HCT116 (cell line): ENCODE measurements at regions of chr19 and their contacts with region 1.

Region 1: GRCh38 chr19:40603389-40604135 is 2.4 kb downstream of the LTBP4 start:
- DNase-seq: peak; percentile 99
- ATAC-seq: peak; percentile 68
- H3K4me3 ChIP-seq: peak overlapping the region; percentile 62 to 67
- H3K27ac ChIP-seq: peak overlapping the region; percentile 87
- H3K4me1 ChIP-seq: peaks cover 36 to 86% of the 10 kb centered on the region in 2 experiments
- H3K27me3 ChIP-seq: no peaks in the 10 kb centered on the region
- CTCF ChIP-seq: no peak
- POLR2A ChIP-seq: no peak
- RAD21 ChIP-seq: no peak

Region 2: GRCh38 chr19:40139533-40140287 is 463.9 kb before region 1 on chr19:
- CTCF ChIA-PET with region 1: no interaction called
- POLR2A ChIA-PET with region 1: no interaction called
- RAD21 ChIA-PET with region 1: no interaction called
- intact Hi-C with region 1: loop called (anchors 10 kb)
- DNase-seq: peak; percentile 48
- ATAC-seq: peak; percentile 80
- H3K4me3 ChIP-seq: no peak overlapping the region
- H3K27ac ChIP-seq: no peak overlapping the region
- H3K4me1 ChIP-seq: no peaks in the 10 kb centered on the region
- H3K27me3 ChIP-seq: peaks cover 18% of the 10 kb centered on the region; the same call in 1 of the 2 replicates
- CTCF ChIP-seq: peak; percentile 60 to 91 (median 85)
- POLR2A ChIP-seq: no peak
- RAD21 ChIP-seq: peak; percentile 98

Region 3: DNA sequence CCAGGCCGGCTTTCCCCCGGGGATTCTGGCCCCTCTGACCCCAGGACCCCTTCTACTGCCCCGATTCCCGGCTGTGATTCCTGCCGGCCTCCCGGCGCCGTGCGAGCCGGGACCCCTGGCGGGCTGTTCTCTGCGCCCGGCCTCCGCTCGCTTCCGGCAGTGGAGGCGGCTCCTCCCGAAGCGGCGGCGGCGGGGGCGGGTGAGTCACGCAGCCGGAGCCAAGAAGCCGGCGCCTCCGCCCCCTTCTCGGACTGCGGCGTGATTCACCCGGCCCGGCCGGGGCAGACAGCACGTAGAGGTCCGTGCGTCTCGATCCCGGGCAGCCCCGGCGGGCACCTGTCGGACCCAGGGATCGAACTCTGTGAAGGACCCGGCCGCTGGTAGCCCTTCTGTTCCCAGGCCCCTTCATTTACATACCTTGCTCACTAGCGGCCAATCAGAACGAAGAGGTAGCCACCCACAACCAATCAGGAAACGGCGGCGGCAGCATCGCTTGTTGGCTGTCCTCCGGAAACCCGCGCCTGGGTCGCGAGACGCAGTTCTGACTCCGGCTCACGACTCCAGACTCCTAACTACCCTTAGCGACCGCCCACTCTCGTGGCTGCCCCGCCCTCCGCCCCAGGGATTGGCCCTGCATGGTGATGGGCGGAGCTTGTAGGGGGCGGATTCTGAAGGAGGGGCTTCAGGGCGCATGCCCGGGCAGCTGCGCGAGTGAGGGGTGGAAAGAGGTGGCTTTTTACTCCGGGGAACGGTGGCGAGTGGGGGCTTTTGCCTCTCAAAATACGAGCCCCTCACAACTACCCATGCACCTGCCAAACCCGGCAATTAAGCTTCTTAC is 177.9 kb before region 1 on chr19 and contains the start of gene SERTAD1:
- CTCF ChIA-PET with region 1: interaction called, 4 read pairs
- POLR2A ChIA-PET with region 1: interaction called, 5 read pairs
- RAD21 ChIA-PET with region 1: no interaction called
- intact Hi-C with region 1: loop called (anchors 5 kb)
- DNase-seq: peak; percentile 98
- ATAC-seq: peak; percentile 79
- H3K4me3 ChIP-seq: peak within 1 kb of the TSS; percentile 65 to 84
- H3K27ac ChIP-seq: peak within 1 kb of the TSS; percentile 98
- H3K4me1 ChIP-seq: peaks cover 27 to 57% of the 10 kb centered on the region in 2 experiments
- H3K27me3 ChIP-seq: no peaks in the 10 kb centered on the region
- CTCF ChIP-seq: peak; percentile 23 to 82 (median 75); a peak in 5 of 6 replicates
- POLR2A ChIP-seq: peak; percentile 97
- RAD21 ChIP-seq: peak; percentile 36
- total RNA-seq, gene SERTAD1: 30.3 TPM

Region 4: DNA sequence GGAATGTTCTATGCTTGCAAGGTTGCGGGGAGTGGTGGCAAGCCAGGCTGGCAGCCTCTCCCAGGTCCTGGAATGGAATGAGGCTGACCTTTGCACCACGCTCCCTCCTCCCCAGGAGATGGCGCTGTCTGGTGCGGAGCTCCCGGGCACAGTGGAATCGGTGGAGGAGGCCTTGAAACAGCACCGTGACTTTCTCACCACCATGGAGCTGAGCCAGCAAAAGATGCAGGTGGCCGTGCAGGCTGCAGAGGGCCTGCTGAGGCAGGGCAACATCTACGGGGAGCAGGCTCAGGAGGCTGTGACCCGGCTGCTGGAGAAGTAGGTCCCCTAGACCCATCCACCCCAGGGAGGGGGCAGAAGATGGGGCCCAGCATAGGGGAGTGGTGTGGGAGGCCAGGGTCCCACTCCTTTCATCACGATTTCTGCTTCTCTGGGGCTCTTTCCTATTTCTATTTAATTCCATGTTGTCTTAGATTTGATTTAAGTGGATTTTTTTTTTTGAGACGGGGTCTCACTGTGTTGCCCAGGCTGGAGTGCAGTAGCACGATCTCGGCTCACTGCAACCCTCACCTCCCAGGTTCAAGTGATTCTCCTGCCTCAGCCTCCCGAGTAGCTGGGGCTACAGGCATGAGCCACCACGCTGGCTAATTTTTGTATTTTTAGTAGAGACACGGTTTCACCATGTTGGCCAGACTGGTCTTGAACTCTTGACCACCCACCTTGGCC is 80.1 kb before region 1 on chr19:
- CTCF ChIA-PET with region 1: interaction called, 19 read pairs
- POLR2A ChIA-PET with region 1: no interaction called
- RAD21 ChIA-PET with region 1: no interaction called
- intact Hi-C with region 1: loop called (anchors 5 kb)
- DNase-seq: peak; percentile 72
- ATAC-seq: peak; percentile 95
- H3K4me3 ChIP-seq: peak overlapping the region; percentile 41 to 51
- H3K27ac ChIP-seq: peak overlapping the region; percentile 4; the same call in 1 of the 2 replicates
- H3K4me1 ChIP-seq: peaks cover 6 to 23% of the 10 kb centered on the region in 2 experiments
- H3K27me3 ChIP-seq: no peaks in the 10 kb centered on the region
- CTCF ChIP-seq: peak; percentile 91 to 95 (median 92)
- POLR2A ChIP-seq: no peak
- RAD21 ChIP-seq: peak; percentile 73

Region 5: DNA sequence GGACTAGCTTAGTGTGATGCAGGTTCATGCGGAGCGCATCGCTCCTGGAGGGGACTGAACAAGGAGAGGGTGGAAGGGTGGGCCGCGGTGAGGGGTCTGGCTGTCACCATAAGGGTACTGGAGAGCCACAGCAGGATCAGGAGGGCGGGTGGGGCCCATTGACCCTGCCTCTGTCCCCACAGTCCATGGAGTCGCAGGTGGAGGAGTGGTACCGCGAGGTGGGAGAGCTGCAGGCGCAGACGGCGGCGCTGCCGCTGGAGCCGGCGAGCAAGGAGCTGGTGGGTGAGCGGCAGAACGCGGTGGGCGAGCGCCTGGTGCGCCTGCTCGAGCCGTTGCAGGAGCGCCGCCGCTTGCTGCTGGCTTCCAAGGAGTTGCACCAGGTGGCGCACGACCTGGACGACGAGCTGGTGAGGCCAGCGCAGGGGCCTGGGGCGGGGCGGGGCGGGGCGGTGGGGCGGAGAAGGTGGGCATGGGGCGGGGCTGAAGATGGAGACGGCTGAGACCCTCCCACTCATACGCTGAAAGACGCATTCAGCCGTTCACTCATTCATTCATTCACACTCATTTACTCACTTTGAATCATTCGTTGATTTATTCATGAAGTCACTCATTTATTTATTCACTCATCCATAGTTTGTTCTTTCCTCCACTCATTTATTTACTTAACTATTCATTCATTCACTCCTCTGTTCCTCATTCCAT is 54.4 kb before region 1 on chr19:
- CTCF ChIA-PET with region 1: interaction called, 27 read pairs
- POLR2A ChIA-PET with region 1: interaction called, 3 read pairs
- RAD21 ChIA-PET with region 1: interaction called, 3 read pairs
- intact Hi-C with region 1: loop called (anchors 1 kb)
- DNase-seq: peak; percentile 63
- ATAC-seq: peak; percentile 98
- H3K4me3 ChIP-seq: peak overlapping the region; percentile 26 to 45
- H3K27ac ChIP-seq: no peak overlapping the region
- H3K4me1 ChIP-seq: peaks cover 4 to 11% of the 10 kb centered on the region in 2 experiments
- H3K27me3 ChIP-seq: no peaks in the 10 kb centered on the region
- CTCF ChIP-seq: peak; percentile 43 to 64 (median 59)
- POLR2A ChIP-seq: no peak
- RAD21 ChIP-seq: peak; percentile 57

Region 6: DNA sequence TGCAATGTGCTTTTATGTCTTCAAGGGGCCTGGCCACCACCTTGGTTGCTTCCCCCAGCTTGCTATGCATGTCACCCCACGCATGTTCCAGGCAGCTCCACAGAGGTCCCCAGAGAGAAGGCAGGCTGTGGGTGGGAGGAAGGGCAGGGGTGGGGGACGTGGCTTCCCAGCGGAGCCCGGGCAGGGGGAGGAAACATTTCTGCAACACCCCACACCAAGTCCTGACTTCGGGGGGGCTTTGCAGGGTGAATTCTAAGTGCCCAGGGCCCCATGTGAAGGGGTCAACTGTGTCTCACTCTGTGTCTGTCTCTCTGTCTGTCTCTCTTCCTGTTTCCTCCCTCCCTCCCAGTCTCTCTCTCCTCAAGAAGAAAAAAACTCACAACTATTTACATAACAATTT is 37.2 kb after region 1 on chr19:
- CTCF ChIA-PET with region 1: interaction called, 32 read pairs
- POLR2A ChIA-PET with region 1: no interaction called
- RAD21 ChIA-PET with region 1: no interaction called
- intact Hi-C with region 1: no loop called
- DNase-seq: no peak
- ATAC-seq: no peak
- H3K4me3 ChIP-seq: no peak overlapping the region
- H3K27ac ChIP-seq: no peak overlapping the region
- H3K4me1 ChIP-seq: peaks cover 20 to 36% of the 10 kb centered on the region in 2 experiments
- H3K27me3 ChIP-seq: no peaks in the 10 kb centered on the region
- CTCF ChIP-seq: no peak
- POLR2A ChIP-seq: no peak
- RAD21 ChIP-seq: no peak